ENCODE measurements at regions of chr1 and their contacts with region 1.

Region 1: DNA sequence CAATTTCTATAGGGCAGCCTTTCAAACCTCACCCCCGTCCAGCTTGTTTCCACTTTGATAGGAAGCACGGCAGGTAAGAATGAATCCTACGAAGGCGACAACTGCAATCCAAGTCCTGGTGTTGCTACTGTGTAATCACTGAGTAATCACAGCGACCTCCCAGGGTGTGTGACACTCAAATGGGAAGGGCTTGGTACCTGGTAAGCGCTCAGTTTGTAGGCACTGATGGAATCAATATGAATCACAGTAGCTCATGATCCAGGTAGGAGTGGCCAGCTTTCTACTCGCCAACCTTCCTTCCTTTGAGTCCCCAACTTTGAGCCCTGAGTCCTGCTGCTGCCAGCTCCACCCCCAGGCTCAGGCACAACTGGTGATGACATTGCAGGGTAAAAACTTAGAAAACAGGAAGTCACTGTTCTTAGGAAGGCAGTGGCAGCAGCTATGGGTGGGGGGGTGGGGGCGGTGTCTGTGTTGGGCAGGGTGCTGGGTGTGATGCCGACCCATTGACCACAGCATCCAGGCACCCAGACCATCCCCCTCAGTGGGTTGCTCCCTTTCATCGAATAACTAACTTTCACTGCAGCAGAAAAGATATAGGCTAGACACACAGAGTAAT is 70.7 kb downstream of the CD247 start:
- DNase-seq: peak; percentile 42 to 91 (median 83)
- ATAC-seq: peak; percentile 88
- H3K4me3 ChIP-seq: peak overlapping the region; percentile 38
- H3K4me3 Mint-ChIP-seq: peak overlapping the region; percentile 72 to 90 (median 82)
- H3K27ac ChIP-seq: peak overlapping the region; percentile 89
- H3K27ac Mint-ChIP-seq: peak overlapping the region; percentile 90 to 99 (median 97)
- H3K4me1 ChIP-seq: peaks cover 71 to 83% of the 10 kb centered on the region in 2 donors
- H3K4me1 Mint-ChIP-seq: peaks cover 56 to 97% (median 82%) of the 10 kb centered on the region in 7 donors
- H3K27me3 ChIP-seq: no peaks in the 10 kb centered on the region
- H3K27me3 Mint-ChIP-seq: no peaks in the 10 kb centered on the region

Region 2: GRCh38 chr1:167460836-167461235 is 13.2 kb after region 1 on chr1:
- CTCF ChIA-PET with region 1: interaction called, 12 read pairs
- POLR2A ChIA-PET with region 1: interaction called, 156 read pairs
- intact Hi-C with region 1: loop called in 1 of 2 experiments (anchors 1 kb)
- DNase-seq: peak in 8 of 9 donors; percentile 43 to 91 (median 82)
- ATAC-seq: peak; percentile 81
- H3K4me3 ChIP-seq: no peak overlapping the region
- H3K4me3 Mint-ChIP-seq: peak overlapping the region in 9 of 10 donors; percentile 60 to 84 (median 70)
- H3K27ac ChIP-seq: peak overlapping the region; percentile 100
- H3K27ac Mint-ChIP-seq: peak overlapping the region; percentile 46 to 98 (median 93)
- H3K4me1 ChIP-seq: peaks cover 15 to 92% of the 10 kb centered on the region in 2 donors
- H3K4me1 Mint-ChIP-seq: peaks cover 51 to 100% (median 88%) of the 10 kb centered on the region in 7 donors
- H3K27me3 ChIP-seq: no peaks in the 10 kb centered on the region
- H3K27me3 Mint-ChIP-seq: no peaks in the 10 kb centered on the region

Region 3: GRCh38 chr1:167474191-167474716 is 26.6 kb after region 1 on chr1:
- CTCF ChIA-PET with region 1: no interaction called
- POLR2A ChIA-PET with region 1: interaction called, 184 read pairs
- intact Hi-C with region 1: no loop called
- DNase-seq: peak in 8 of 9 donors; percentile 41 to 87 (median 58)
- ATAC-seq: peak; percentile 89
- H3K4me3 ChIP-seq: peak overlapping the region; percentile 49
- H3K4me3 Mint-ChIP-seq: peak overlapping the region; percentile 52 to 98 (median 86)
- H3K27ac ChIP-seq: peak overlapping the region; percentile 75
- H3K27ac Mint-ChIP-seq: peak overlapping the region; percentile 47 to 98 (median 95)
- H3K4me1 ChIP-seq: peaks cover 36 to 81% of the 10 kb centered on the region in 2 donors
- H3K4me1 Mint-ChIP-seq: peaks cover 57 to 100% (median 94%) of the 10 kb centered on the region in 7 donors
- H3K27me3 ChIP-seq: no peaks in the 10 kb centered on the region
- H3K27me3 Mint-ChIP-seq: no peaks in the 10 kb centered on the region

Region 4: DNA sequence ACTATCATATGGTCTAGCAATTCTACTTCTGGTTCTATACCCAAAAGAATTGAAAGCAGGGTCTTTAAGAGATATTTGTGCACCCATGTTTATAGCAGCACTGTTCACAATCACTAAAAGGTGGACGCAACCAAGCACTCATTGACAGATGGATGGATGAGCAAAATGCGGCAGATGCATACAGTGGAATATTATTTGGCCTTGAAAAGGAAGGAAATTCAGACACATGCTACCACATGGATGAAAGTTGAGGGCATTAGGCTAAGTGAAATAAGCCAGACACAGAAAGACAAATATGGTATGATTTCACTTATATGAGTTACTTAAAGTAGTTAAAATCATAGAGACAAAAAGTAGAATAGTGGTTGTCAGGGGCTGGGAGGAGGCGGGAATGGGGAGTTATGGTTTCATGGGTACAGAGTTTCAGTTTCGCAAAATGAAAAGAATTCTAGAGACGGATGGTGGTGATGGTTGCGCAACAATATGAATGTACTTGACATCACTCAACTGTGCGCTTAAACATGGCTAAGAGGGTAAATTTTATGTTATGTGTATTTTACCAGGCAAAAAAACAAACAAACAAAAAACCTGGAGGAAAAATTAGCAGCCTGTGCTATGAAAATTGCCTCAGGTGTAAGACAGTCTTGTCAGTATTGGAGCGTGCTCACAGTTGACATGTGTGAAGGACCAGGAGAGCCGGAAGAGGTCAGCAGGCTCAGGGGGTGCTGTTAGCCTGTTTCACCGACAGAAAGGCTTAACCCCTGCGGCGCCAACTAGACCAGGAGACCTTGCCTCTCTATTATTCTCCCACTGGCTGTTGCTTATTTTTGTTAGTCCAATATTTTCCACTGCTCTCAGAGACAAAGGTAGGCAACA is 44.2 kb after region 1 on chr1:
- CTCF ChIA-PET with region 1: no interaction called
- POLR2A ChIA-PET with region 1: interaction called, 184 read pairs
- intact Hi-C with region 1: loop called (anchors 1 to 2 kb)
- DNase-seq: peak in 6 of 9 donors; percentile 46 to 69 (median 54)
- ATAC-seq: peak; percentile 42
- H3K4me3 ChIP-seq: peak overlapping the region; percentile 35
- H3K4me3 Mint-ChIP-seq: peak overlapping the region; percentile 75 to 88 (median 82)
- H3K27ac ChIP-seq: peak overlapping the region; percentile 96
- H3K27ac Mint-ChIP-seq: peak overlapping the region; percentile 84 to 100 (median 95)
- H3K4me1 ChIP-seq: peaks cover 49 to 94% of the 10 kb centered on the region in 2 donors
- H3K4me1 Mint-ChIP-seq: peaks cover 71 to 100% (median 95%) of the 10 kb centered on the region in 7 donors
- H3K27me3 ChIP-seq: no peaks in the 10 kb centered on the region
- H3K27me3 Mint-ChIP-seq: no peaks in the 10 kb centered on the region

Region 5: GRCh38 chr1:167510244-167510643 is 62.6 kb after region 1 on chr1:
- CTCF ChIA-PET with region 1: interaction called, 40 read pairs
- POLR2A ChIA-PET with region 1: interaction called, 281 read pairs
- intact Hi-C with region 1: no loop called
- DNase-seq: peak in 1 of 9 donors; percentile 38
- ATAC-seq: peak; percentile 37
- H3K4me3 ChIP-seq: peak overlapping the region; percentile 29
- H3K4me3 Mint-ChIP-seq: peak overlapping the region; percentile 58 to 100 (median 90)
- H3K27ac ChIP-seq: peak overlapping the region; percentile 96
- H3K27ac Mint-ChIP-seq: peak overlapping the region; percentile 80 to 100 (median 94)
- H3K4me1 ChIP-seq: peaks cover 48 to 73% of the 10 kb centered on the region in 2 donors
- H3K4me1 Mint-ChIP-seq: peaks cover 57 to 98% (median 85%) of the 10 kb centered on the region in 7 donors
- H3K27me3 ChIP-seq: no peaks in the 10 kb centered on the region
- H3K27me3 Mint-ChIP-seq: no peaks in the 10 kb centered on the region